ENCODE measurements at regions of chr17 and their contacts with region 1.

Region 1: GRCh38 chr17:65198653-65199382 is 61.6 kb downstream of the RGS9 start:
- DNase-seq: peak; percentile 62
- ATAC-seq: peak; percentile 75
- H3K4me3 ChIP-seq: no peak overlapping the region
- H3K27ac ChIP-seq: no peak overlapping the region
- H3K4me1 ChIP-seq: no peaks in the 10 kb centered on the region
- H3K27me3 ChIP-seq: no peaks in the 10 kb centered on the region
- CTCF ChIP-seq: peak; percentile 67 to 96 (median 90)
- POLR2A ChIP-seq: no peak
- RAD21 ChIP-seq: peak; percentile 97

Region 2: DNA sequence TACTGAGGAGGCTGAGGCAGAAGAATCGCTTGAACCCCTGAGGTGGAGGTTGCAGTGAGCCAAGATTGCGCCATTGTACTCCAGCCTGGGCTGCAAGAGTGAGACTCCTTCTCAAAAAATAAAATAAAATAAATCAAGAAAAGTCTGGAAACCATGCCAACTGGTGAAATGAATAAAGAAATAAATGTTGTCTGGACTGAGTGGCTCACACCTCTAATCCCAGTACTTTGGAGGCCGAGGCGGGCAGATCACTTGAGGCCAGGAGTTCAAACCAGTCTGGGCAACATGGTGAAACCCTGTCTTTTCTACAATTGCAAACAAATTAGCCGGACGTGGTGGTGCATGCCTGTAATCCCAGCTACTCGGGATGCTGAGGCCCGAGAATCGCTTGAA is 278.8 kb before region 1 on chr17:
- CTCF ChIA-PET with region 1: no interaction called
- POLR2A ChIA-PET with region 1: no interaction called
- RAD21 ChIA-PET with region 1: no interaction called
- intact Hi-C with region 1: loop called (anchors 2 kb)
- DNase-seq: no peak
- ATAC-seq: peak; percentile 17
- H3K4me3 ChIP-seq: peak overlapping the region; percentile 58 to 68
- H3K27ac ChIP-seq: peak overlapping the region; percentile 85
- H3K4me1 ChIP-seq: peaks cover 6 to 10% of the 10 kb centered on the region in 2 experiments; a peak in 3 of 4 replicates
- H3K27me3 ChIP-seq: no peaks in the 10 kb centered on the region
- CTCF ChIP-seq: no peak
- POLR2A ChIP-seq: no peak
- RAD21 ChIP-seq: no peak